GM12878 (cell line): ENCODE measurements at regions of chr14 and their contacts with region 1.

Region 1: GRCh38 chr14:77314043-77314442 is 6.6 kb downstream of the POMT2 start:
- DNase-seq: no peak
- ATAC-seq: no peak
- H3K4me3 ChIP-seq: no peak overlapping the region
- H3K27ac ChIP-seq: no peak overlapping the region
- H3K4me1 ChIP-seq: no peaks in the 10 kb centered on the region
- H3K27me3 ChIP-seq: no peaks in the 10 kb centered on the region
- CTCF ChIP-seq: no peak
- EP300 ChIP-seq: no peak
- POLR2A ChIP-seq: no peak
- RAD21 ChIP-seq: no peak

Region 2: DNA sequence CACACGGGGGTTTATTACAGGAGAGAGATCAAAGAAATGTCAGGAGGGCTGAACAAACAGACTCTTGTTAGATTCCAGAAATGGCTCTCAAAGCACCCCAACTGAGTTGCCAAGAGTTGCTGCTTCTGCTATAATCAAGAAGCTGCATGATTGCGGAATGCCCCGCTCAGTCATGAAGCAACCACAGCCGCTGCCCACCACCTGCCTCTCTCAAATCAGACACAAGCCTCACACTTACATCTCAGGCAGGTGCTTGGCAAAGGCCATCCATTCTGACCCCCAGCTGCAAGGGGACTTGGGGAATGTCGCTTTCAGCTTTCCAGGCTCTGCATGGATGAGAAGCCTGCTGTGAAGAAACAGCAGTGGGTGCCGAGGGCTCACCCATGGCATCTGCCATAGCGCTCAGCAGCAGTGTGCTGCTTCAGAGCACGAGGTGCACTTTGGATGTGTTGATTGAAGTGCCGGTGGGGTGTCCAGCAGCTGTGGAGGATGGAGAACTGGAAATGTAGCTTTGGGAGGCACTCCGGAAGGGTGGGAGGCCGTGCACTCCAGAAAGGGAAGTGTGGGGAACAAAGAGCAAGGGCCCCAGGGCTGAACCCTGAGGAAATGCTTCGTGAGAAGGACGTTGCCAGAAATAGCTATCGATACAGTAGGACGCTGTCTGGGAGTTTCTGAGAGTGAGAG is 450.2 kb before region 1 on chr14:
- CTCF ChIA-PET with region 1: no interaction called
- POLR2A ChIA-PET with region 1: no interaction called
- RAD21 ChIA-PET with region 1: no interaction called
- SMC1A ChIA-PET with region 1: no interaction called
- in situ Hi-C with region 1: loop called (anchors 5 kb)
- intact Hi-C with region 1: no loop called
- DNase-seq: peak; percentile 13
- ATAC-seq: peak; percentile 83
- H3K4me3 ChIP-seq: no peak overlapping the region
- H3K27ac ChIP-seq: peak overlapping the region; percentile 43
- H3K4me1 ChIP-seq: peaks cover 25% of the 10 kb centered on the region
- H3K27me3 ChIP-seq: no peaks in the 10 kb centered on the region
- CTCF ChIP-seq: no peak
- EP300 ChIP-seq: no peak
- POLR2A ChIP-seq: no peak
- RAD21 ChIP-seq: no peak

Region 3: DNA sequence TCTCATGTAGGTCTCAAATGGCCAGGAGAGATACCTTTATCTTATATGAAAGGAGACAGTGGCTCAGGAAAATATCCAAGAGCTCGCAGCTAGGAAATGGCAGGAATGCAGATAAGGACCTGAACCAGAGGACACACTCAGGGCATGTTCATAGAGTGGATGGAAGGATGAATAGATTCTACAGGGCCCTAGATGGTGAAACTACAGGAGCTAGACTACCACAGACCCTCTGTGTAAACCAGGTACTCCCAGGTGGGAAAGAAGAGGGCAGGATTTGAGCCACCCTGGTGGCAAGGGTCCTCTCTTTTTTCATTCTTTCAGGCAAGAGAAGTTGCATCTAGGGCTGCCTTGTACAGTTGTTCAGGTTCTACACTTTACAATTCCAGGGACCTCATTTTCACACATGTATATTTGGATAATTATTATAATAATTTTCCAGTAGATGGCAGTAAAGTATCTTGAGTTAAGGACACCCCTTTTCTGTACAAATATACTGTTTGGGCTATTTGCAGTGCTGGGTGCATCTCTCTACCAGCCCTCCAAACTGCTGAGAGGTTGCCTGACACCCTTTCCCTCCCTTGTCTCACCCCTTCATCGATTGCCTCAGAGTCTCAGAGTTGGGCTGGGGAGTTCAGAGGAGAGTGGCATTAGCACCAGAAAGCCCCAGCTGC is 162.0 kb before region 1 on chr14:
- CTCF ChIA-PET with region 1: interaction called, 159 read pairs
- POLR2A ChIA-PET with region 1: interaction called, 3 read pairs
- RAD21 ChIA-PET with region 1: interaction called, 48 read pairs
- SMC1A ChIA-PET with region 1: interaction called, 45 read pairs
- in situ Hi-C with region 1: loop called (anchors 5 kb)
- intact Hi-C with region 1: loop called (anchors 2 kb)
- DNase-seq: no peak
- ATAC-seq: peak; percentile 91
- H3K4me3 ChIP-seq: no peak overlapping the region
- H3K27ac ChIP-seq: no peak overlapping the region
- H3K4me1 ChIP-seq: no peaks in the 10 kb centered on the region
- H3K27me3 ChIP-seq: peaks cover 0 to 2% of the 10 kb centered on the region in 2 experiments; a peak in 2 of 4 replicates
- CTCF ChIP-seq: peak in 2 of 3 experiments; percentile 7 to 41; a peak in 3 of 6 replicates
- EP300 ChIP-seq: no peak
- POLR2A ChIP-seq: no peak
- RAD21 ChIP-seq: peak; percentile 58

Region 4: DNA sequence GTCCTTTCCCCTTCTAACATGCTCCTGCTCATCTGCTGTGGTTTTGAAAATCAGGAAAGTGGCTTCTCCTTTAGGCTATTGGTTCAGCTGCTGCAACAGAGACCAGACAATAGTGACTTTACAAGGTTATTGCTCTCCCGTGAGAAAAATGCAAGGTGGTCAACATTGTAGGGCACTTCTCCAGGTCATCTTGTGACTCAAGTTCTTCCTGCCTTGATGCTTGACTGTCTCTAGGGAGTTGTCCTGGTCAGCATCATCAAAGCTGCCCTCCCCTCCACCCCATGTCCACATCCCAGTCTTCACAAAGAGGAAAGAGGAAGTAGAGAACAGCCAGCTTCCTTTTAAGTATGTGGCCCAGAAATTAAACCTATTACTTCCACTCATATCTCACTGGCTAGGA is 136.3 kb before region 1 on chr14:
- CTCF ChIA-PET with region 1: no interaction called
- POLR2A ChIA-PET with region 1: no interaction called
- RAD21 ChIA-PET with region 1: no interaction called
- SMC1A ChIA-PET with region 1: no interaction called
- in situ Hi-C with region 1: no loop called
- intact Hi-C with region 1: no loop called
- DNase-seq: no peak
- ATAC-seq: no peak
- H3K4me3 ChIP-seq: no peak overlapping the region
- H3K27ac ChIP-seq: no peak overlapping the region
- H3K4me1 ChIP-seq: no peaks in the 10 kb centered on the region
- H3K27me3 ChIP-seq: peaks cover 0 to 3% of the 10 kb centered on the region in 2 experiments; a peak in 1 of 4 replicates
- CTCF ChIP-seq: no peak
- EP300 ChIP-seq: no peak
- POLR2A ChIP-seq: no peak
- RAD21 ChIP-seq: no peak

Region 5: GRCh38 chr14:77290741-77291140 is 23.3 kb before region 1 on chr14:
- CTCF ChIA-PET with region 1: interaction called, 12 read pairs
- POLR2A ChIA-PET with region 1: no interaction called
- RAD21 ChIA-PET with region 1: no interaction called
- SMC1A ChIA-PET with region 1: interaction called, 5 read pairs
- in situ Hi-C with region 1: no loop called
- intact Hi-C with region 1: no loop called
- DNase-seq: no peak
- ATAC-seq: no peak
- H3K4me3 ChIP-seq: no peak overlapping the region
- H3K27ac ChIP-seq: no peak overlapping the region
- H3K4me1 ChIP-seq: no peaks in the 10 kb centered on the region
- H3K27me3 ChIP-seq: no peaks in the 10 kb centered on the region
- CTCF ChIP-seq: no peak
- EP300 ChIP-seq: no peak
- POLR2A ChIP-seq: no peak
- RAD21 ChIP-seq: no peak

Region 6: GRCh38 chr14:77356899-77357298 is 42.9 kb after region 1 on chr14:
- CTCF ChIA-PET with region 1: interaction called, 13 read pairs
- POLR2A ChIA-PET with region 1: interaction called, 5 read pairs
- RAD21 ChIA-PET with region 1: no interaction called
- SMC1A ChIA-PET with region 1: interaction called, 7 read pairs
- in situ Hi-C with region 1: no loop called
- intact Hi-C with region 1: no loop called
- DNase-seq: no peak
- ATAC-seq: no peak
- H3K4me3 ChIP-seq: no peak overlapping the region
- H3K27ac ChIP-seq: no peak overlapping the region
- H3K4me1 ChIP-seq: peaks cover 5% of the 10 kb centered on the region; the same call in 1 of the 2 replicates
- H3K27me3 ChIP-seq: no peaks in the 10 kb centered on the region
- CTCF ChIP-seq: no peak
- EP300 ChIP-seq: no peak
- POLR2A ChIP-seq: no peak
- RAD21 ChIP-seq: no peak

Region 7: DNA sequence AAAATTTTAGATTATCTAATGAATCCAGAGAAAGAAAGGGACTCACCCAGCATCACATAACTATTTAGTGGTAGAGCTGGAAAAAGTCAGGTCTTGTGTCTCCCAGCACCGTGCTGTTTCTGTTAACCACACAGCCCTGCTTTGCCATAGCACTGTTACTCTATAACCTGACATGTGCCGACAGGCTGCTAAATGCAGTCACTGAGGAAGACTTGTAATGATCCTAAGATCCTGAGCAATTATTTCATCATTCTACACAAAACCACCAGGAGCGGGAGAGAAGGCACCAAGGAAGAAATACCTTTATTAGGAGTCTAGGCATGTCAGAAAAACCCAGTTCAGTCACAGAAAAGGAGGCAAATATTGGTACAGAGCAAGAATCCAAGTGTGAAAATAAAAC is 112.4 kb after region 1 on chr14:
- CTCF ChIA-PET with region 1: interaction called, 10 read pairs
- POLR2A ChIA-PET with region 1: no interaction called
- RAD21 ChIA-PET with region 1: interaction called, 3 read pairs
- SMC1A ChIA-PET with region 1: interaction called, 3 read pairs
- in situ Hi-C with region 1: no loop called
- intact Hi-C with region 1: no loop called
- DNase-seq: no peak
- ATAC-seq: no peak
- H3K4me3 ChIP-seq: no peak overlapping the region
- H3K27ac ChIP-seq: no peak overlapping the region
- H3K4me1 ChIP-seq: no peaks in the 10 kb centered on the region
- H3K27me3 ChIP-seq: no peaks in the 10 kb centered on the region
- CTCF ChIP-seq: no peak
- EP300 ChIP-seq: no peak
- POLR2A ChIP-seq: no peak
- RAD21 ChIP-seq: no peak

Region 8: DNA sequence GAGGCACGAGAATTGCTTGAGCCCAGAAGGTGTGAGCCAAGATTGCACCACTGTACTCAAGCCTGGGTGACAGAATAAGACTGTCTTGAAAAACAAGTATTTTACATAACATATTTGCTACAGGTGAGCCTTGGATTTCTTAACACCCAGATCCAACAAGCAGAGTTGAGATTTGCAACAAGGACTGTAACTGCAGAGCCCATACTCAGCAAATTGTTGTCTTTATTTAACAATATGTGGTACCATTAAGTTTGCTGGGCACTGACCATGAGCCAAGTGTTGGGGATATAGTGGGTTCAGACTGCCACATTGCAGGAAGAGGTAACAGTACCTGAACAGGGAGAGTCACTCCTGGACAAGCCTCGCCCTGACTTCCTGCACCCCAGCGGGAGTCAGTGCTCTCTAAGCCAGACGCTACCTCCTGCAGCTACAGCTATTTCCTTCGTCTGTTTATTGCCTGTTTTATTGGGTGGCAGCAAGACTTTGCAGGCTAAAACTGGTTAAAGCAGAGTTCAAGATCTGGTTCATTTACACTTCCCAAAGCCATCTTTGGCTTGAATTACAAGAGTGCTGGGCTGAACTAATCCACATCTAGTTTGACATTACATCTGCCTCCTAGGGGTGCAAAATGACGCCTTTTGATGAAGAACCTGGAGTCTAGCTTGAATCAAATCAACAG is 156.3 kb after region 1 on chr14:
- CTCF ChIA-PET with region 1: no interaction called
- POLR2A ChIA-PET with region 1: no interaction called
- RAD21 ChIA-PET with region 1: no interaction called
- SMC1A ChIA-PET with region 1: no interaction called
- in situ Hi-C with region 1: no loop called
- intact Hi-C with region 1: no loop called
- DNase-seq: no peak
- ATAC-seq: no peak
- H3K4me3 ChIP-seq: no peak overlapping the region
- H3K27ac ChIP-seq: no peak overlapping the region
- H3K4me1 ChIP-seq: no peaks in the 10 kb centered on the region
- H3K27me3 ChIP-seq: no peaks in the 10 kb centered on the region
- CTCF ChIP-seq: no peak
- EP300 ChIP-seq: no peak
- POLR2A ChIP-seq: 0 out of 2 replicates have a peak, but pooled peaks have one; percentile 18
- RAD21 ChIP-seq: no peak